Esophagus muscularis mucosa (tissue), 4 donors: ENCODE measurements at regions of chr3 and their contacts with region 1.

Region 1: DNA sequence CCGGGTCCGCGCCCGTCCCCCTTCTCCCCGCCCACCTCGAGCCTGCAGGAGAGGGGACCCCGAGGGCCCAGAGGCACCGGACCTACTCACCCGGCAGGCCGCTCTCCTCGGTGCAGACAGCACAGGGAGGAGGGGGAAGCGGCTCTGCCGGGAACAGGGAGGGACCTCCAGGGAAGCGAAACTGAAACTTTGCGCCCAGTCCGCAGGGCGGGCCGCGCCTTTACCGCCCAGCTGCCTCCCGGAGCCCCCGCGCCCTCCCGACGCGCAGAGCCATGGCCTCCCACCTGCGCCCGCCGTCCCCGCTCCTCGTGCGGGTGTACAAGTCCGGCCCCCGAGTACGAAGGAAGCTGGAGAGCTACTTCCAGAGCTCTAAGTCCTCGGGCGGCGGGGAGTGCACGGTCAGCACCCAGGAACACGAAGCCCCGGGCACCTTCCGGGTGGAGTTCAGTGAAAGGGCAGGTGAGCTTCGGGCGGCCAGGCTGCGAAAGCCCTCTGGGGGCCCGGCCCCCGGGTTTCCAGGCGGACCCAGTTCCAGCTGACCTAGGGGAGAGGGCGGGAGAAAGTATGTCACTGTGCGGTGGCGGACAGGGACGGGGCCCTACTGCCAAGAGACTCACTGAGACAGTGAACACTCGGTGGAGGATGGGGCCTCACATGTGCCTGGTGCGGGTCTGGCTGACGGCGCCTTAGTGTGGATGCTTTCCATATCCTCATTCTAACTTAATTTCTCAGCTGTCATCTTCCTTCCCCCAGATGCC is at the starts of genes DTX3L and PARP9:
- DNase-seq: peak; percentile 96
- H3K4me3 ChIP-seq: peak within 1 kb of the TSS; percentile 75 to 93 (median 88)
- H3K27ac ChIP-seq: peak within 1 kb of the TSS; percentile 90 to 97 (median 95)
- H3K4me1 ChIP-seq: peaks cover 23 to 74% (median 59%) of the 10 kb centered on the region in 4 donors
- H3K27me3 ChIP-seq: no peaks in the 10 kb centered on the region
- CTCF ChIP-seq: no peak
- EP300 ChIP-seq: no peak
- POLR2A ChIP-seq: no peak
- total RNA-seq, gene DTX3L: 21.6 to 33.5 (median 21.8) TPM
- total RNA-seq, gene PARP9: 16.7 to 24.0 (median 21.3) TPM

Region 2: GRCh38 chr3:122392868-122393844 is 171.2 kb before region 1 on chr3:
- intact Hi-C with region 1: loop called (anchors 5 kb)
- DNase-seq: no peak
- H3K4me3 ChIP-seq: no peak overlapping the region
- H3K27ac ChIP-seq: peak overlapping the region in 3 of 4 donors; percentile 2 to 33 (median 11)
- H3K4me1 ChIP-seq: peaks cover 3 to 24% (median 22%) of the 10 kb centered on the region in 4 donors
- H3K27me3 ChIP-seq: no peaks in the 10 kb centered on the region
- CTCF ChIP-seq: peak; percentile 62 to 77 (median 65)
- EP300 ChIP-seq: no peak
- POLR2A ChIP-seq: no peak

Region 3: GRCh38 chr3:122621112-122621511 is 56.8 kb after region 1 on chr3:
- intact Hi-C with region 1: no loop called
- DNase-seq: no peak
- H3K4me3 ChIP-seq: no peak overlapping the region
- H3K27ac ChIP-seq: no peak overlapping the region
- H3K4me1 ChIP-seq: no peaks in the 10 kb centered on the region
- H3K27me3 ChIP-seq: no peaks in the 10 kb centered on the region
- CTCF ChIP-seq: no peak
- EP300 ChIP-seq: no peak
- POLR2A ChIP-seq: no peak

Region 4: DNA sequence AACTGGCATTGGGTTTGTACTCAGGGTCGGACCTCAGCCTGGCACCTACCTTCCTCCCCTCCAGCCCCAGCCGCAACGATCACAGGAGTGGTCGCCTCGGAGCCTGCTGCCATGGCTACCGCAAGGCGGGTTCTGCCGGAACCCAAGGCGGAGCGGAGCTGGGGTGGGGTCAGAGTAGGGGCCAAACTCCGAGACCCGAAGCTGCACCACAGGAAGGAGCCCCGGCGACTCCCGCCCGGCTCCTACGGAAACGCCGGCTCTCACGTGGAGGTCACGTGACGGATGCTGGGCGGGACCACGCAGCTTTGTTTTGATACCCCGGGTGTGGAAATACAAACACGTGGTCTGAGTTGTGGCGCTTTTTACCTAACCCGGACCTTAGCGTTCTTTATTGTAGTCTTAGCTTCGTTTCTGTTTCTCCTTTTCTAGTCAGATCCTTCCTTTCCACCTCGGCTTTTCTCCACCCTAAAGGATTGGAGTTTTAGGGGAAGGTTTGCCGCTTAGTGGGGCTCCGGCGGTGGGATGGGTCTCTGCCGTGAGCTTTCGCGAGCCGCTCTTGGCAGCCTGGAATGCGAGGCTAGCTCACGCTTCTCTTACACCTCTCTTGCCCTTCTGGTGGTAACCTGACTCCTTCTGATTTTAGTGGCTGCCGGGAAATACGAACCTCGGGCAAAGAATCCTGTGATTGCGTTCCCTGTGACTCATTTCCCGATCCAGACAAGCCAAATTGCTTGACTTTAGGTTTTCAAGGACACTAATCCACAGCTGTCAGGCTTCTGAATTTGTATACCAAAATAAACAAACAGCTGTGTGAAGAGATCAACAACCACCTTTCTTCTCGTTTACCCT is 229.5 kb after region 1 on chr3 and contains the start of gene HSPBAP1:
- intact Hi-C with region 1: loop called (anchors 10 kb)
- DNase-seq: peak; percentile 99
- H3K4me3 ChIP-seq: peak within 1 kb of the TSS; percentile 89 to 98 (median 92)
- H3K27ac ChIP-seq: peak within 1 kb of the TSS; percentile 97 to 98 (median 98)
- H3K4me1 ChIP-seq: peaks cover 4 to 39% (median 36%) of the 10 kb centered on the region in 4 donors
- H3K27me3 ChIP-seq: no peaks in the 10 kb centered on the region
- CTCF ChIP-seq: no peak
- EP300 ChIP-seq: peak; percentile 47
- POLR2A ChIP-seq: peak; percentile 71
- total RNA-seq, gene HSPBAP1: 5.5 to 14.5 (median 8.2) TPM